ENCODE measurements at regions of chr2 and their contacts with region 1.

Region 1: GRCh38 chr2:132547074-132547687 is 122.8 kb downstream of the LYPD1 start:
- DNase-seq: peak; percentile 79
- H3K4me3 ChIP-seq: no peak overlapping the region
- H3K27ac ChIP-seq: no peak overlapping the region
- H3K4me1 ChIP-seq: no peaks in the 10 kb centered on the region
- H3K27me3 ChIP-seq: no peaks in the 10 kb centered on the region
- CTCF ChIP-seq: peak; percentile 32 to 90 (median 72)
- POLR2A ChIP-seq: no peak

Region 2: GRCh38 chr2:132503701-132504100 is 43.5 kb before region 1 on chr2:
- intact Hi-C with region 1: no loop called
- DNase-seq: no peak
- H3K4me3 ChIP-seq: no peak overlapping the region
- H3K27ac ChIP-seq: no peak overlapping the region
- H3K4me1 ChIP-seq: no peaks in the 10 kb centered on the region
- H3K27me3 ChIP-seq: no peaks in the 10 kb centered on the region
- CTCF ChIP-seq: no peak
- POLR2A ChIP-seq: no peak

Region 3: DNA sequence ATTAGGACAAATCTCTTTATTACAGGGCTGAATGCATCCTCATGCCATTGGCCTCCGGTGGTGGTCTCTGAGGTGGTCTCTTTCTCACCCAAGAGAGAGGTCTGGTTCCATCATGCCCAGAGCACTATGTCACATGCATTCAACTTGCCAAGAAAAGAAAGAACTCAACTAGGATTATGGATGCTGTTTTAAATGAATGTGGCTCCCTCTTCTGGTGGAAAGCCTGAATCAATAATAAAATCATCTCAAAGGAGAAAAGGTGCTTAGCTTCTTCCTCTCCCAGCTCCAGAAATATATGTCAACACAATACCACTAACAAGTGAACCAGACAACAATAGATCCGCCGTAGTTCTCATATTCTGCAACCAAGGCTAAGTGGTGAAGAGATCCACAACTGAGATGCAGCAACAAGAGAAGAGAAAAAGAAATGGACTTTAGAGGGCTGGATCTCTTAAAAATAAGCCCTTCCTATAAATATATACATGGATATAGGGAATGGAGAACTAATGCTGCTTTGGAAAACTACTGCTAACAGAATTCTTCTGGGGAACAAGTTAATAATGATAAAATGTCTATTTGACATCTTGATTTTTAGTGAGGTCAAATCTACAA is 624.3 kb after region 1 on chr2:
- intact Hi-C with region 1: loop called (anchors 5 kb)
- DNase-seq: peak; percentile 12
- H3K4me3 ChIP-seq: no peak overlapping the region
- H3K27ac ChIP-seq: no peak overlapping the region
- H3K4me1 ChIP-seq: no peaks in the 10 kb centered on the region
- H3K27me3 ChIP-seq: no peaks in the 10 kb centered on the region
- CTCF ChIP-seq: peak in 3 of 4 experiments; percentile 55 to 73 (median 57)
- POLR2A ChIP-seq: no peak

Region 4: GRCh38 chr2:133848111-133848649 is 1301.0 kb after region 1 on chr2:
- intact Hi-C with region 1: loop called (anchors 5 kb)
- DNase-seq: no peak
- H3K4me3 ChIP-seq: no peak overlapping the region
- H3K27ac ChIP-seq: no peak overlapping the region
- H3K4me1 ChIP-seq: no peaks in the 10 kb centered on the region
- H3K27me3 ChIP-seq: no peaks in the 10 kb centered on the region
- CTCF ChIP-seq: no peak
- POLR2A ChIP-seq: no peak

Measured in prostate gland (tissue), 2 donors.